Transverse colon (tissue), 4 donors: ENCODE measurements at regions of chr3 and their contacts with region 1.

Region 1: DNA sequence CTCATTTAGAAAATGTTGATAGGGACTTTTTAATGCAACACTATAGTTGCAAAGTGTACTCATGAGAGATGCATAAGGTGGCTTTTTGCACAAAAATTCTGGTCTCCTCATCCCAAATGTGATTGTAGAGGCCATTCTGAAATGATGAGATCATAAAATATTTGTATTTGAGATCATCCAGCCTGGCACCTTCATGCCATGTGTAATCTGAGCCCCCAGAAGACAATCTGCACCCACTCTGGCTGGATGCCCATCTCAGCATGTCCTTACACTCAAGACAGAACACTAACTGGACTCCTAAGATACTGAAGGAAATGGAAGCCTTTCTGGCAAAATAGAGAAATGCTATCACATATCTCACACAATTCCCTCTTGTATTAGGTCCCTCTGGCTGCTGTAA is 49.2 kb downstream of the SLC7A14 start:
- DNase-seq: no peak
- H3K4me3 ChIP-seq: no peak overlapping the region
- H3K27ac ChIP-seq: no peak overlapping the region
- H3K4me1 ChIP-seq: no peaks in the 10 kb centered on the region
- H3K27me3 ChIP-seq: peaks cover 13% of the 10 kb centered on the region
- CTCF ChIP-seq: no peak
- EP300 ChIP-seq: no peak
- POLR2A ChIP-seq: no peak

Region 2: GRCh38 chr3:169493521-169494141 is 1043.1 kb before region 1 on chr3:
- in situ Hi-C with region 1: no loop called
- intact Hi-C with region 1: no loop called
- DNase-seq: no peak
- H3K4me3 ChIP-seq: no peak overlapping the region
- H3K27ac ChIP-seq: no peak overlapping the region
- H3K4me1 ChIP-seq: no peaks in the 10 kb centered on the region
- H3K27me3 ChIP-seq: no peaks in the 10 kb centered on the region
- CTCF ChIP-seq: no peak
- EP300 ChIP-seq: no peak
- POLR2A ChIP-seq: no peak

Region 3: GRCh38 chr3:170429050-170429449 is 107.7 kb before region 1 on chr3:
- in situ Hi-C with region 1: no loop called
- intact Hi-C with region 1: no loop called
- DNase-seq: no peak
- H3K4me3 ChIP-seq: no peak overlapping the region
- H3K27ac ChIP-seq: no peak overlapping the region
- H3K4me1 ChIP-seq: no peaks in the 10 kb centered on the region
- H3K27me3 ChIP-seq: no peaks in the 10 kb centered on the region
- CTCF ChIP-seq: no peak
- EP300 ChIP-seq: no peak
- POLR2A ChIP-seq: no peak

Region 4: DNA sequence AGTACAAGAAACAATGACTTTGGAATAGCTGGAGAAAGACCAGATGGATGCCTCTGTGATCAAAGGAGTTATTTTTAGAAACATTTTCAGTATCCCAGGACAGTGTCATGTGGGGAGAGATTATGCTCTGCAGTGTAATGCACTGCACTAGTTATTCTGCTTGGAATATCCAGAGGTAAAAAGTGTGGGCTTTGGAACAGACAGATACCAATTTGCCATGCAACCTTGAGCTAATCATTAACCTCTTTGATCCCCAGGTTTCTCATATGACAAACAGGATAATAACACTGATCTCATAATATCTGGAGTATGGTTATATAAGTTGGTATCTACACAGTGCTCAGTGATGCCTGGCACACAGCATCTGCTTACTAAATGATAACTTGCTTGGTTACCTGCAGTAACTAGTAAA is 61.4 kb after region 1 on chr3:
- in situ Hi-C with region 1: no loop called
- intact Hi-C with region 1: no loop called
- DNase-seq: no peak
- H3K4me3 ChIP-seq: no peak overlapping the region
- H3K27ac ChIP-seq: no peak overlapping the region
- H3K4me1 ChIP-seq: peaks cover 0 to 15% (median 6%) of the 10 kb centered on the region in 4 donors
- H3K27me3 ChIP-seq: no peaks in the 10 kb centered on the region
- CTCF ChIP-seq: no peak
- EP300 ChIP-seq: no peak
- POLR2A ChIP-seq: no peak

Region 5: GRCh38 chr3:170680593-170680992 is 143.9 kb after region 1 on chr3:
- in situ Hi-C with region 1: no loop called
- intact Hi-C with region 1: loop called (anchors 5 kb)
- DNase-seq: no peak
- H3K4me3 ChIP-seq: no peak overlapping the region
- H3K27ac ChIP-seq: no peak overlapping the region
- H3K4me1 ChIP-seq: no peaks in the 10 kb centered on the region
- H3K27me3 ChIP-seq: no peaks in the 10 kb centered on the region
- CTCF ChIP-seq: no peak
- EP300 ChIP-seq: no peak
- POLR2A ChIP-seq: no peak